WTC11 (cell line): ENCODE measurements at regions of chr4 and their contacts with region 1.

Region 1: GRCh38 chr4:7335344-7336069 is 99.2 kb downstream of the PSAPL1 start:
- DNase-seq: peak; percentile 91
- ATAC-seq: peak; percentile 94
- H3K4me3 Mint-ChIP-seq: no peak overlapping the region
- H3K27ac Mint-ChIP-seq: no peak overlapping the region
- H3K4me1 Mint-ChIP-seq: peaks cover 12% of the 10 kb centered on the region
- H3K27me3 Mint-ChIP-seq: peaks cover 2% of the 10 kb centered on the region; the same call in 1 of the 2 replicates
- CTCF ChIP-seq: peak; percentile 73

Region 2: DNA sequence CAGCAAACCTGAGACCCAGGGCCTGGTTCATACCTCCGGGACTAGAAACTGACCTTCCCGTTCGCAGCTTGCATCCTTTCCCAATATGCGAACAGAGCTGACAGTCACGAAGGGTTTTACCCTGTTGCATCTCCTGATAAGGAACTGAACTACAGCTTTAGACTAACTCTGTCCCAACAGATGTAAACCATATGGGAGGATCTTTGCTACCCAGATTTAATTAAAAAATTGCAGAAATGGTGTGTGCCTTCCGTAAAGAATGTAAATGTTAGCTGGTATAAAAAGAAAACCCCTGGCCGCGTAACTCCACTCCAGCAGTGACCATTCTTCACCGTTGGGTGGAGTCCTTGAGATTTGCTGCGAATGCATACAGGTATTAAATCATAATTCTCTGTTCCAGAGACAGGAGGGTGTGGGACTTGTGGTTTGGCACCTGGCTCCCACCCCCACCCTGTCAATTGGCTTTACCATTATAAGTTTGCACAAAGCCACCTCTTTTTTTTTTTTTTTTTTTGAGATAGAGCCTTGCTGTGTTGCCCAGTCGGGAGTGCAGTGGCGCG is 183.8 kb before region 1 on chr4:
- CTCF ChIA-PET with region 1: interaction called, 11 read pairs
- POLR2A ChIA-PET with region 1: no interaction called
- DNase-seq: no peak
- ATAC-seq: no peak
- H3K4me3 Mint-ChIP-seq: no peak overlapping the region
- H3K27ac Mint-ChIP-seq: no peak overlapping the region
- H3K4me1 Mint-ChIP-seq: 0 out of 2 replicates have a peak, but pooled peaks cover 7% of the 10 kb centered on the region
- H3K27me3 Mint-ChIP-seq: no peaks in the 10 kb centered on the region; the same call in 1 of the 2 replicates
- CTCF ChIP-seq: no peak

Region 3: DNA sequence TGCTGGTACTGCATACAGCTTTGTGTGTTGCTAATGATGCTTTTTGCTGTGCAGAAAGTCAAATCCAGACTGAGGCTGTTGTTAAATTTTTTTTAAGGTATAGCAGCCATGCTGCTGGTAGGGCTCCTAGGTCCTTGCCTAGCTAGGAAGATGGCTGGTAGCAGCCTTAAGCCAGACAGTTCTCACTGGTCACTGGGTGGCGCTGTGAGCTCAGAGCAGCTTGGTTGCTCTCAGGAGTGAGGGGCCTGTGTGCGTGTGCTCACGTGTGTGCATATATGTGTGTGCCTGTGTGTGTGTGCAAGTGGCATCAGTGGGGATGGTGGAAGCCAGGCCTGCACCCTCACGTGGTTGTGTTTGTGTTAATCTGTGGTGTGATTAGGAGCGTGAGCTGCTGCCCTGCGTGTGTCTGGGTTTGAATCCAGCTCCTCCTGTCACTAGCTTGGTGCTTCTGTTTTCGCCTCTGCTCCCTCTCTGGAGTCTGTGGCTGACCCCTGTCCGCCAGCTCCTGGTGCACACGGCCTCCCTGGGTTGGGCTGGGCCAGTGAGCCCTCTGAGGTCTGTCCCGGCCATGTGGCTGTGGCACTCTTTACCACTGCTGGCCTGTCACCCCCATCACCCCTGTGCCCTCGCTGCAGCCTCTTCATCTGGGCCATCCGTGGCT is 97.1 kb before region 1 on chr4:
- CTCF ChIA-PET with region 1: interaction called, 21 read pairs
- POLR2A ChIA-PET with region 1: no interaction called
- DNase-seq: peak; percentile 45
- ATAC-seq: peak; percentile 61; the same call in 1 of the 2 replicates
- H3K4me3 Mint-ChIP-seq: no peak overlapping the region
- H3K27ac Mint-ChIP-seq: no peak overlapping the region
- H3K4me1 Mint-ChIP-seq: no peaks in the 10 kb centered on the region
- H3K27me3 Mint-ChIP-seq: no peaks in the 10 kb centered on the region
- CTCF ChIP-seq: peak; percentile 28; the same call in 1 of the 2 replicates

Region 4: GRCh38 chr4:7301846-7302630 is 33.5 kb before region 1 on chr4:
- CTCF ChIA-PET with region 1: interaction called, 13 read pairs
- POLR2A ChIA-PET with region 1: no interaction called
- DNase-seq: no peak
- ATAC-seq: no peak
- H3K4me3 Mint-ChIP-seq: no peak overlapping the region
- H3K27ac Mint-ChIP-seq: peak overlapping the region; percentile 51; the same call in 1 of the 2 replicates
- H3K4me1 Mint-ChIP-seq: peaks cover 3% of the 10 kb centered on the region; the same call in 1 of the 2 replicates
- H3K27me3 Mint-ChIP-seq: no peaks in the 10 kb centered on the region
- CTCF ChIP-seq: no peak

Region 5: GRCh38 chr4:7352486-7352885 is 17.0 kb after region 1 on chr4:
- CTCF ChIA-PET with region 1: interaction called, 12 read pairs
- POLR2A ChIA-PET with region 1: no interaction called
- DNase-seq: no peak
- ATAC-seq: no peak
- H3K4me3 Mint-ChIP-seq: no peak overlapping the region
- H3K27ac Mint-ChIP-seq: no peak overlapping the region
- H3K4me1 Mint-ChIP-seq: no peaks in the 10 kb centered on the region
- H3K27me3 Mint-ChIP-seq: no peaks in the 10 kb centered on the region
- CTCF ChIP-seq: no peak

Region 6: GRCh38 chr4:7513671-7514070 is 178.2 kb after region 1 on chr4:
- CTCF ChIA-PET with region 1: no interaction called
- POLR2A ChIA-PET with region 1: no interaction called
- DNase-seq: no peak
- ATAC-seq: no peak
- H3K4me3 Mint-ChIP-seq: no peak overlapping the region
- H3K27ac Mint-ChIP-seq: no peak overlapping the region
- H3K4me1 Mint-ChIP-seq: peaks cover 21% of the 10 kb centered on the region
- H3K27me3 Mint-ChIP-seq: no peaks in the 10 kb centered on the region
- CTCF ChIP-seq: no peak